H1 (cell line): ENCODE measurements at regions of chr10 and their contacts with region 1.

Region 1: GRCh38 chr10:123236122-123236521 is 81.9 kb downstream of the BUB3 start:
- DNase-seq: no peak
- H3K4me3 ChIP-seq: no peak overlapping the region
- H3K27ac ChIP-seq: no peak overlapping the region
- H3K4me1 ChIP-seq: no peaks in the 10 kb centered on the region
- H3K27me3 ChIP-seq: no peaks in the 10 kb centered on the region
- CTCF ChIP-seq: peak; percentile 28 to 69 (median 47)
- EP300 ChIP-seq: no peak
- POLR2A ChIP-seq: no peak
- RAD21 ChIP-seq: peak; percentile 28 to 64; a peak in 3 of 4 replicates

Region 2: GRCh38 chr10:123249894-123250293 is 13.8 kb after region 1 on chr10:
- CTCF ChIA-PET with region 1: interaction called, 31 read pairs
- POLR2A ChIA-PET with region 1: no interaction called
- DNase-seq: no peak
- H3K4me3 ChIP-seq: no peak overlapping the region
- H3K27ac ChIP-seq: no peak overlapping the region
- H3K4me1 ChIP-seq: no peaks in the 10 kb centered on the region; a peak in 1 of 7 replicates
- H3K27me3 ChIP-seq: no peaks in the 10 kb centered on the region
- CTCF ChIP-seq: no peak
- EP300 ChIP-seq: no peak
- POLR2A ChIP-seq: no peak
- RAD21 ChIP-seq: no peak